Endothelial cell of umbilical vein (primary cell): ENCODE measurements at regions of chr3 and their contacts with region 1.

Region 1: GRCh38 chr3:155023951-155024638 is 56.0 kb upstream of the MME start:
- DNase-seq: peak; percentile 76
- H3K4me3 ChIP-seq: no peak overlapping the region
- H3K27ac ChIP-seq: peak overlapping the region; percentile 10
- H3K4me1 ChIP-seq: peaks cover 21% of the 10 kb centered on the region
- H3K27me3 ChIP-seq: no peaks in the 10 kb centered on the region
- CTCF ChIP-seq: no peak
- POLR2A ChIP-seq: no peak

Region 2: DNA sequence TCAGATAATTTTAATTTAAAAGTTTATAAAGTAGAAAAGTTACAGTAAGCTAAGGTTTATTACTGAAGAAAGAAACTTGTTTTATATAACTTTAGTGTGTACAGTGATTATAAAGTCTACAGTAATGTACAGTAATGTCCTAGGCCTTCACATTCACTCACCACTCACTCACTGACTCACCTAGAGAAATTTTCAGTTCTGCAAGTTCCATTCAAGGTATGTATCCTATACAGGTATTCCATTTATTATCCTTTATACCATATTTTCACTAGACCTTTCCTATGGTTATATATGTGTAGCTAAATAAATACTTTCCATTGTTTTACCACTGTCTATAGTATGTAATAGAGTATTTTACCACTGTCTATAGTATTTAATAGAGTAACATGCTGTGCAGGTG is 22.8 kb after region 1 on chr3:
- CTCF ChIA-PET with region 1: no interaction called
- POLR2A ChIA-PET with region 1: no interaction called
- dilution Hi-C with region 1: no loop called
- intact Hi-C with region 1: no loop called
- DNase-seq: no peak
- H3K4me3 ChIP-seq: no peak overlapping the region
- H3K27ac ChIP-seq: no peak overlapping the region
- H3K4me1 ChIP-seq: no peaks in the 10 kb centered on the region
- H3K27me3 ChIP-seq: no peaks in the 10 kb centered on the region
- CTCF ChIP-seq: no peak
- POLR2A ChIP-seq: no peak

Region 3: GRCh38 chr3:155070932-155071387 is 46.9 kb after region 1 on chr3:
- CTCF ChIA-PET with region 1: interaction called, 4 read pairs
- POLR2A ChIA-PET with region 1: no interaction called
- dilution Hi-C with region 1: no loop called
- intact Hi-C with region 1: loop called (anchors 1 kb)
- DNase-seq: peak; percentile 95
- H3K4me3 ChIP-seq: no peak overlapping the region
- H3K27ac ChIP-seq: peak overlapping the region; percentile 93
- H3K4me1 ChIP-seq: peaks cover 27% of the 10 kb centered on the region
- H3K27me3 ChIP-seq: no peaks in the 10 kb centered on the region
- CTCF ChIP-seq: no peak
- POLR2A ChIP-seq: peak; percentile 28